ENCODE measurements at regions of chr9 and their contacts with region 1.

Region 1: DNA sequence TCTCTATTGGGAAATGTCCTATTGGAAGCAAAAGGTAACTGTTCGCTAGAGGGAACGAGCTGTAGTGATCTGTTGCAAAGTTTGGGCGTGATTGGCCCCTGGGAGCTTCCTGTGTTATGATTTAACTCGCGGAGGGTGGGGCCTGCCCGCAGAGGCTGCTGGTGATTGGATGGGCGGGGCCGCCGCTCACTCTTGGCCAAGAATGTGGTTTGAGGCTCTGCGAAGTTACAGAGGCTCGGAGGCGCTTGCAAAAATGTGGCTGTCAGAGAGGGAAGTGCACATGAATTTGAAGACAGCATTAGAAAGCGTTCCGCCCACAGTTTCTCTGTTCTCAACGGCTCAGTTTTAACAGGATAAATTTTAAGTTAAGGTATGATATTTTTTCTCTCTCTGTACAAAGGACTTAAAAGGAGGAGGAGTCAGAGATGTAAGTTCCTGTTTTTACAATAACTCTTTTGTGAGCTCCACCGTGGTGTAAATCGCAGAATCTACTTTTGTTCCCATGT is 46.9 kb downstream of the CNTRL start:
- DNase-seq: peak; percentile 98
- ATAC-seq: peak; percentile 99
- H3K4me3 ChIP-seq: peak overlapping the region; percentile 51 to 79
- H3K27ac ChIP-seq: no peak overlapping the region
- H3K4me1 ChIP-seq: no peaks in the 10 kb centered on the region
- H3K27me3 ChIP-seq: no peaks in the 10 kb centered on the region

Region 2: GRCh38 chr9:121021301-121021700 is 100.3 kb before region 1 on chr9:
- intact Hi-C with region 1: no loop called
- DNase-seq: no peak
- ATAC-seq: no peak
- H3K4me3 ChIP-seq: no peak overlapping the region
- H3K27ac ChIP-seq: no peak overlapping the region
- H3K4me1 ChIP-seq: no peaks in the 10 kb centered on the region
- H3K27me3 ChIP-seq: no peaks in the 10 kb centered on the region

Region 3: DNA sequence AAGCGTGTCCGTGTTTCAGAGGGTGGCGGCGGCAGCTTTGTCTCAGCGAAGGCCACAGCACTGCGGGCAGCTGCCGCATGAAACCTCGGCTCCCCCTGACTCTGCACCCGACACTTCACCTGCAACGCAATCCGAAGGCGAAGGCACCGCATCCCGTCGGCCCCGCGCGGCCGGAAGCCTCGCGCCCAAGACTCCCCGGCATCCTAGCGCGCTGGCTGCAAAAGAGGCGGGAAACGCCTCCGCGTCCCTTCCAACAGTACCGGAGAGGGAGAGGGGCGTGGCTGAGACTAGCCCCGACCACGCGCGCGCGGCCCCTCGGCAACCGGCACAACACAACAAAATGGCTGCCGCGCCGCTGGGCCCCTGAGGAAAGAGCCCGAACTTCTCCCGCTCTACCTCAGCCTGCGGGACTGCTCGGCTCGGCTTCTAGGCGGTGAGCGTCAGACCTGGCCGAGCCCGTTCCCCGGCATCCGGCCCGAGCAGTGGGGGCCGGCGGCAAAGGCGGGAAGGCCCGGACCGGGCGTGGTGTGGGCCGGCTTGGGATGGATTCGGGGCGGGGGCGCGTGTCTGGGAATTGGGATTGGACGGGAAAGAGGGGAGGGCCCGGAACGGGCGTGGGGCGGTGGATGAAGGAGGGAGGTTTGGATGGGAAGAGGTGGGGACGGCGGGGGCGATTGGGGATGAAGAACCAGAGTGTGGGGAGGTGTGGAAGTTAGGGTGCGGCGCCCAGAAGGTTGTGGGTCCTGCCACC is 46.8 kb before region 1 on chr9 and contains the start of gene CNTRL:
- intact Hi-C with region 1: loop called in 1 of 2 experiments (anchors 5 kb)
- DNase-seq: peak; percentile 95 to 97
- ATAC-seq: peak; percentile 96
- H3K4me3 ChIP-seq: peak within 1 kb of the TSS; percentile 60 to 67
- H3K27ac ChIP-seq: peak within 1 kb of the TSS in 1 of 2 donors; percentile 79
- H3K4me1 ChIP-seq: no peaks in the 10 kb centered on the region
- H3K27me3 ChIP-seq: no peaks in the 10 kb centered on the region
- total RNA-seq, gene CNTRL: 18.9 to 25.8 TPM